Adrenal gland (tissue), 19 donors: ENCODE measurements at regions of chr4 and their contacts with region 1.

Region 1: GRCh38 chr4:173246719-173247118 is 78.1 kb downstream of the GALNT7 start:
- DNase-seq: no peak
- H3K4me3 ChIP-seq: no peak overlapping the region
- H3K27ac ChIP-seq: no peak overlapping the region
- H3K4me1 ChIP-seq: no peaks in the 10 kb centered on the region
- H3K27me3 ChIP-seq: no peaks in the 10 kb centered on the region
- CTCF ChIP-seq: no peak
- POLR2A ChIP-seq: no peak

Region 2: GRCh38 chr4:173121076-173121561 is 125.6 kb before region 1 on chr4:
- intact Hi-C with region 1: no loop called
- DNase-seq: no peak
- H3K4me3 ChIP-seq: no peak overlapping the region
- H3K27ac ChIP-seq: no peak overlapping the region
- H3K4me1 ChIP-seq: no peaks in the 10 kb centered on the region
- H3K27me3 ChIP-seq: no peaks in the 10 kb centered on the region
- CTCF ChIP-seq: no peak
- POLR2A ChIP-seq: no peak

Region 3: GRCh38 chr4:173169428-173170181 is 77.1 kb before region 1 on chr4:
- intact Hi-C with region 1: loop called in 1 of 2 experiments (anchors 5 kb)
- DNase-seq: peak; percentile 51 to 68 (median 57)
- H3K4me3 ChIP-seq: peak overlapping the region; percentile 2 to 95 (median 44)
- H3K27ac ChIP-seq: peak overlapping the region; percentile 37 to 94 (median 80)
- H3K4me1 ChIP-seq: peaks cover 0 to 11% of the 10 kb centered on the region in 2 donors
- H3K27me3 ChIP-seq: no peaks in the 10 kb centered on the region
- CTCF ChIP-seq: no peak
- POLR2A ChIP-seq: peak in 1 of 2 donors; percentile 4